B cell (primary cell): ENCODE measurements at regions of chr6 and their contacts with region 1.

Region 1: GRCh38 chr6:110201151-110201884 is 21.1 kb downstream of the CDC40 start:
- DNase-seq: no peak
- ATAC-seq: no peak
- H3K4me3 ChIP-seq: no peak overlapping the region
- H3K4me3 Mint-ChIP-seq: no peak overlapping the region
- H3K27ac ChIP-seq: peak overlapping the region in 1 of 2 donors; percentile 47
- H3K27ac Mint-ChIP-seq: peak overlapping the region; percentile 71
- H3K4me1 ChIP-seq: peaks cover 22 to 33% of the 10 kb centered on the region in 2 donors
- H3K4me1 Mint-ChIP-seq: peaks cover 51% of the 10 kb centered on the region
- H3K27me3 ChIP-seq: no peaks in the 10 kb centered on the region
- H3K27me3 Mint-ChIP-seq: no peaks in the 10 kb centered on the region
- CTCF ChIP-seq: no peak

Region 2: GRCh38 chr6:110158479-110158878 is 42.8 kb before region 1 on chr6:
- CTCF ChIA-PET with region 1: no interaction called
- POLR2A ChIA-PET with region 1: no interaction called
- intact Hi-C with region 1: no loop called
- DNase-seq: no peak
- ATAC-seq: no peak
- H3K4me3 ChIP-seq: no peak overlapping the region
- H3K4me3 Mint-ChIP-seq: no peak overlapping the region
- H3K27ac ChIP-seq: no peak overlapping the region
- H3K27ac Mint-ChIP-seq: no peak overlapping the region
- H3K4me1 ChIP-seq: peaks cover under 1 to 8% of the 10 kb centered on the region in 2 donors
- H3K4me1 Mint-ChIP-seq: peaks cover 9% of the 10 kb centered on the region
- H3K27me3 ChIP-seq: no peaks in the 10 kb centered on the region
- H3K27me3 Mint-ChIP-seq: peaks cover 3% of the 10 kb centered on the region
- CTCF ChIP-seq: no peak

Region 3: GRCh38 chr6:110188791-110189190 is 12.5 kb before region 1 on chr6:
- CTCF ChIA-PET with region 1: interaction called, 76 read pairs
- POLR2A ChIA-PET with region 1: interaction called, 11 read pairs
- intact Hi-C with region 1: no loop called
- DNase-seq: no peak
- ATAC-seq: no peak
- H3K4me3 ChIP-seq: no peak overlapping the region
- H3K4me3 Mint-ChIP-seq: no peak overlapping the region
- H3K27ac ChIP-seq: no peak overlapping the region
- H3K27ac Mint-ChIP-seq: no peak overlapping the region
- H3K4me1 ChIP-seq: peaks cover 26 to 52% of the 10 kb centered on the region in 2 donors
- H3K4me1 Mint-ChIP-seq: peaks cover 38% of the 10 kb centered on the region
- H3K27me3 ChIP-seq: no peaks in the 10 kb centered on the region
- H3K27me3 Mint-ChIP-seq: no peaks in the 10 kb centered on the region
- CTCF ChIP-seq: no peak

Region 4: GRCh38 chr6:110965629-110966229 is 764.4 kb after region 1 on chr6:
- CTCF ChIA-PET with region 1: no interaction called
- POLR2A ChIA-PET with region 1: no interaction called
- intact Hi-C with region 1: no loop called
- DNase-seq: no peak
- ATAC-seq: no peak
- H3K4me3 ChIP-seq: no peak overlapping the region
- H3K4me3 Mint-ChIP-seq: no peak overlapping the region
- H3K27ac ChIP-seq: no peak overlapping the region
- H3K27ac Mint-ChIP-seq: no peak overlapping the region
- H3K4me1 ChIP-seq: no peaks in the 10 kb centered on the region
- H3K4me1 Mint-ChIP-seq: no peaks in the 10 kb centered on the region
- H3K27me3 ChIP-seq: no peaks in the 10 kb centered on the region
- H3K27me3 Mint-ChIP-seq: no peaks in the 10 kb centered on the region
- CTCF ChIP-seq: no peak

Region 5: DNA sequence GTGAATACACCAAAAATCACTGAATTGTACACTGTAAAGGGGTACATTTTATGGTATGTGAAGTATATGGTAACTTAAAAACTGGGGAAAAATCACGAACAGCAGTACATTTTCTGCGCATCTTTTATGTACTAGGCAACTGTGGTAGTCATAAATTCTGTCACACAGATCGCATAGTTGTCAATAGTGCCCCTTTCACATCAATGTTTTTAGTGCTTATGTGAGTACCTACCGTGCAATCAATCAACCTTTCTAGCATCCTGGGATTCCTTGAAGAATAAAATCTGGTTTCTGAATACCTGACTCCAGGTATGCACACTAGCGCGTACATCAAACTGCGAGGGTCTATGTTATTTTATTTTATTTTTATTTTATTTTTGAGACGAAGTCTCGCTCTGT is 779.9 kb after region 1 on chr6:
- CTCF ChIA-PET with region 1: no interaction called
- POLR2A ChIA-PET with region 1: no interaction called
- intact Hi-C with region 1: loop called (anchors 10 kb)
- DNase-seq: peak; percentile 43
- ATAC-seq: no peak
- H3K4me3 ChIP-seq: peak overlapping the region; percentile 73 to 98 (median 87)
- H3K4me3 Mint-ChIP-seq: peak overlapping the region; percentile 98
- H3K27ac ChIP-seq: peak overlapping the region; percentile 77 to 93
- H3K27ac Mint-ChIP-seq: peak overlapping the region; percentile 99
- H3K4me1 ChIP-seq: peaks cover 13 to 18% of the 10 kb centered on the region in 2 donors
- H3K4me1 Mint-ChIP-seq: peaks cover 34% of the 10 kb centered on the region
- H3K27me3 ChIP-seq: no peaks in the 10 kb centered on the region
- H3K27me3 Mint-ChIP-seq: no peaks in the 10 kb centered on the region
- CTCF ChIP-seq: no peak